ENCODE measurements at regions of chr12 and their contacts with region 1.

Region 1: GRCh38 chr12:21697904-21698630 is 40.4 kb upstream of the LDHB start:
- DNase-seq: no peak
- ATAC-seq: no peak
- H3K4me3 ChIP-seq: no peak overlapping the region
- H3K27ac ChIP-seq: no peak overlapping the region
- H3K4me1 ChIP-seq: no peaks in the 10 kb centered on the region
- H3K27me3 ChIP-seq: no peaks in the 10 kb centered on the region
- CTCF ChIP-seq: peak; percentile 43; the same call in 1 of the 2 replicates

Region 2: DNA sequence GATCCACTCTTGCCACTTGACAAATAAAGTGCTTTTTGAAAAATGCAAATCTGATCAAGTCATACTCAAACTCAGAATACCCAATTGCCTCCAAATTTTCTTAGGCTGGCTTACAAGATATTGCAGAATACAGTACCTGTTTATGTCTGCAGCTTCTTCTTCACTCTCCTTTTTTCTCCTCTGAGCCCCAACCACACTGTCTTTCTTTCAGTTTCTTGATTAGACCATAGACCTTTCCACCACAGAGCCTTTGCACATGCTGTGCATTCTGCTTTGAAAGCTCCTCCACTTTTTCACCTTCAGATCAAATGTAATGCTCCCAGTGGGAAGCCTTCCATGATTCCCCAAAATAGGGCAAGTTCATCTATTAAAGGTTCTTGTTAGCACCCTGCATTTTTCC is 79.5 kb before region 1 on chr12:
- CTCF ChIA-PET with region 1: no interaction called
- POLR2A ChIA-PET with region 1: no interaction called
- in situ Hi-C with region 1: no loop called
- intact Hi-C with region 1: no loop called
- DNase-seq: no peak
- ATAC-seq: no peak
- H3K4me3 ChIP-seq: no peak overlapping the region
- H3K27ac ChIP-seq: no peak overlapping the region
- H3K4me1 ChIP-seq: no peaks in the 10 kb centered on the region
- H3K27me3 ChIP-seq: no peaks in the 10 kb centered on the region
- CTCF ChIP-seq: no peak

Region 3: DNA sequence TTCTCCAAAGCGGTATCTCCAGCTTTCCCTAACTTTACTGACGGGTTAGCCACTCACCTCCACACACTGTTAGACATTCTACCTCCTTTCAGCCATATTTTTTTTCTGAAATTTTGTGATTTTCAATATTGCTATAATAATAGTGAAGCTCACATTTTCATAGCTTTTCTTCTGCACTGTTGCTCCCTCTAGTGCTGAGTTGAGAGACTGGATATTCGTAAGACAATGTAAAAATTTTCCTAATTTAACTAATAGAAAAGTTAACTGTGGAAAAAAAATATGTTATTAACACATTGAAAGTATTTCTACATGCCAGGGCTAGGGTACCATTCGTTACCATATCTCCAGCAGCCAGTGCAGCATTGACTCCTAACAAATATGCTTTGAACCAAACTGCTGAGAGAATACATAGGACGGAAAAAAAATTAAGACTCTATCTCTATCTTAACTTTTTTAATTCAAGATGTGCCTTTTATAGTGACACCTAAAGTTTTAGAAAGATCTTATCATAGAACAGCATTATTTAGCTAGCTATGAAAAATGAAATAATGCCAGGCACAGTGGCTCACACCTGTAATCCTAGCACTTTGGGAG is 291.8 kb after region 1 on chr12:
- CTCF ChIA-PET with region 1: interaction called, 13 read pairs
- POLR2A ChIA-PET with region 1: no interaction called
- in situ Hi-C with region 1: no loop called
- intact Hi-C with region 1: loop called (anchors 5 kb)
- DNase-seq: no peak
- ATAC-seq: no peak
- H3K4me3 ChIP-seq: no peak overlapping the region
- H3K27ac ChIP-seq: no peak overlapping the region
- H3K4me1 ChIP-seq: no peaks in the 10 kb centered on the region
- H3K27me3 ChIP-seq: no peaks in the 10 kb centered on the region
- CTCF ChIP-seq: peak; percentile 46; the same call in 1 of the 2 replicates

Region 4: GRCh38 chr12:22018860-22019259 is 320.8 kb after region 1 on chr12:
- CTCF ChIA-PET with region 1: interaction called, 5 read pairs
- POLR2A ChIA-PET with region 1: no interaction called
- in situ Hi-C with region 1: no loop called
- intact Hi-C with region 1: loop called (anchors 2 kb)
- DNase-seq: no peak
- ATAC-seq: no peak
- H3K4me3 ChIP-seq: no peak overlapping the region
- H3K27ac ChIP-seq: no peak overlapping the region
- H3K4me1 ChIP-seq: no peaks in the 10 kb centered on the region
- H3K27me3 ChIP-seq: no peaks in the 10 kb centered on the region
- CTCF ChIP-seq: peak; percentile 22; the same call in 1 of the 2 replicates